B cell (primary cell): ENCODE measurements at regions of chr4 and their contacts with region 1.

Region 1: GRCh38 chr4:5998333-5998936 is 19.8 kb downstream of the C4orf50 start:
- DNase-seq: peak; percentile 42
- ATAC-seq: no peak
- H3K4me3 ChIP-seq: no peak overlapping the region
- H3K4me3 Mint-ChIP-seq: no peak overlapping the region
- H3K27ac ChIP-seq: no peak overlapping the region
- H3K27ac Mint-ChIP-seq: no peak overlapping the region
- H3K4me1 ChIP-seq: no peaks in the 10 kb centered on the region
- H3K4me1 Mint-ChIP-seq: no peaks in the 10 kb centered on the region
- H3K27me3 ChIP-seq: no peaks in the 10 kb centered on the region
- H3K27me3 Mint-ChIP-seq: peaks cover 16% of the 10 kb centered on the region
- CTCF ChIP-seq: peak; percentile 85

Region 2: GRCh38 chr4:4888695-4889094 is 1109.7 kb before region 1 on chr4:
- CTCF ChIA-PET with region 1: no interaction called
- POLR2A ChIA-PET with region 1: no interaction called
- intact Hi-C with region 1: no loop called
- DNase-seq: no peak
- ATAC-seq: no peak
- H3K4me3 ChIP-seq: no peak overlapping the region
- H3K4me3 Mint-ChIP-seq: no peak overlapping the region
- H3K27ac ChIP-seq: no peak overlapping the region
- H3K27ac Mint-ChIP-seq: no peak overlapping the region
- H3K4me1 ChIP-seq: no peaks in the 10 kb centered on the region
- H3K4me1 Mint-ChIP-seq: no peaks in the 10 kb centered on the region
- H3K27me3 ChIP-seq: peaks cover 0 to 8% (median 4%) of the 10 kb centered on the region in 4 experiments
- H3K27me3 Mint-ChIP-seq: peaks cover 36% of the 10 kb centered on the region
- CTCF ChIP-seq: no peak

Region 3: GRCh38 chr4:5988086-5988845 is 10.2 kb before region 1 on chr4:
- CTCF ChIA-PET with region 1: interaction called, 10 read pairs
- POLR2A ChIA-PET with region 1: no interaction called
- intact Hi-C with region 1: no loop called
- DNase-seq: no peak
- ATAC-seq: no peak
- H3K4me3 ChIP-seq: no peak overlapping the region
- H3K4me3 Mint-ChIP-seq: no peak overlapping the region
- H3K27ac ChIP-seq: no peak overlapping the region
- H3K27ac Mint-ChIP-seq: no peak overlapping the region
- H3K4me1 ChIP-seq: no peaks in the 10 kb centered on the region
- H3K4me1 Mint-ChIP-seq: no peaks in the 10 kb centered on the region
- H3K27me3 ChIP-seq: no peaks in the 10 kb centered on the region
- H3K27me3 Mint-ChIP-seq: peaks cover 9% of the 10 kb centered on the region
- CTCF ChIP-seq: no peak